ENCODE measurements at regions of chr12 and their contacts with region 1.

Region 1: DNA sequence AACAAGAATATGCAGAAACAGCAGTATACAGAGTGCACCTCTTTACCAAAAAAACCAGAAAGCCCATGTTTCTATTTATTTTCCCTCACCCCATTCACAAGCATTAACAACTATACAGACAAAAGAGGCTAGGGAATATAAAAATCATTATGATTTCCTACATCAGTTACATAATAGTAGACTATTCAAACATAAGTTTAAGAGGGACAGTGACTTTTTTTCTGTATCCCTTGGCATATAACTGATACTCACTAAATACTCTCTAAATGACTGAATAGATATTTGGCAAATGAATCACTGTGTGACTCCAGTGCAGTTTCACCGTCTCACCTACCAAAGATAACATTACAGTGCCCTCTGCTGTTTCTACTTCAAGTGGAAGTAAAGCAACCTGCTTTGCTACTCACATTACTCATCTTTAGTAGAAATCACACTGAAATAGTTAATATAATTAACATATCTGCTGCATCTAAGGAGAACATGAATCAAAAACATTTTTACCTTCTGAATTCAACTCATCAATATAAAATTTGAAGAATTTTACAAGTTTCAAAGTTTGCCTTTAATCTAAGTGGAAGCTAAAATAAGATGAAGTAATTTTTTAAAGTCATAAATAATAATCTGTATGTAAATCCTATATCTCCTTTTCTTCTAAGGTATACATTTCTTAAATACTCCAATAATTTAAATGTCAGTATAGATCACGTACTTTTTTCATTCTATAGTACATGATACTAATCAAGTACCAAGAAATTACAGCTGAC is 103.8 kb downstream of the OSBPL8 start:
- DNase-seq: peak; percentile 68
- H3K4me3 ChIP-seq: no peak overlapping the region
- CTCF ChIP-seq: peak; percentile 56

Region 2: GRCh38 chr12:76470028-76470939 is 14.5 kb after region 1 on chr12:
- CTCF ChIA-PET with region 1: interaction called, 29 read pairs
- POLR2A ChIA-PET with region 1: no interaction called
- DNase-seq: peak; percentile 84
- H3K4me3 ChIP-seq: no peak overlapping the region
- CTCF ChIP-seq: no peak

Region 3: DNA sequence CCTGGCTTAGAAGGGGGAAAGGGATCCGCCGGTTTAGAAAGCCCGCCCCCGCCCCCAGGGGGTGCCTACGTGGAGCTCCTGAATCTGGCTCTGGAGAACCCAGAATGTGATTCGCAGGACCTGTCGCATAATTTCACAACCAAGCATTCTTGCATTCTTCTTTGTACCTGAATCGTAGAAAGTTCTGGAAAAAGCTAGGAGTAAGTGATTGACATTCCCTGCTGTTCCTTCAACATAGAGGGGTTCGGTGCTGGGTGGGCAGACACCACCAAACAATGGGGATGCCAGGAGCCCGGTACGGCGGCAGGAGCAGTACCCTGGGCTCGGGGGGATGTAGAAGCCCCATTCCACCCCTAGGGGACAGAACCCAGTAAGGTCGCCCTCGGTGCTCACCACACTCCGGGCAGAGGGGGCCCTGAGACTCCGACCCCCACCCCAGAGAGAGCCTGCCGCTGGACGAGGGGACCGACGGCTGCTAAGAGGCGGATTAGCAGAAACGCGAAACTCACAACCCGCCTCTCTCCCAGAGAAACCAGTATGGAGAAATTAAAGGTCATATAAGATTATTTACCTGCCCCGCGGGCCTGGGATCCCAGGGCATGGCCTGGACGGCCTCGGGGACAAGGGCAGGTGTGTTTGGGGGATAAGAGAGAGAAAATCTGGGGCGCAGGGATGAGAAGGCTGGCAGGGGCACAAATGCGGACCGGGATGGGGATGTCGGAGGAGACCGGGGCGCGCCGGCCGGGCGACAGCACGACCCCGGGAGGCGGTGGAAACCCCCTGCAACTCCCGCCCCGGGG is 422.5 kb after region 1 on chr12:
- CTCF ChIA-PET with region 1: no interaction called
- POLR2A ChIA-PET with region 1: no interaction called
- DNase-seq: no peak
- H3K4me3 ChIP-seq: peak overlapping the region; percentile 80
- CTCF ChIP-seq: peak; percentile 26

Measured in AG04449 (cell line).